ENCODE measurements at regions of chr11 and their contacts with region 1.

Region 1: DNA sequence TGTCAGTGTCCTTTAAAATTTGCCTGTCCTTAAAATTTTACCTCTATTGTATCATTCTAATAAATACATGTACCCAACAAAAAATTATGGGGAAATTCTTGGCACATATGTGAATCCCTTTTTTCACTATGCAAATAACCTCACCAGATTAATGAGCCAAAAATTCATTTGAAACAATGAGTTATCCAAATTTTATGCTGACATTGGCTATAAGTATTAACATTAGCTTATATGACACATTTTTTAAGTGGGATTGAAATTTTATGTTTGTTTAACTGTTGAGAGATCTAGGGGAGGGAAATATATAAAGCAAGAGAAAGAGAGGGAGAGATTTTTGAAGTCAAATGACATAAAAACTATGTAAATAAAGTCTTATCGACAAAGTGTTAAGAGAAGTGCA is 11.8 kb upstream of the PDGFD start:
- DNase-seq: no peak
- H3K4me3 ChIP-seq: no peak overlapping the region
- H3K27ac ChIP-seq: no peak overlapping the region
- H3K4me1 ChIP-seq: no peaks in the 10 kb centered on the region
- H3K27me3 ChIP-seq: peaks cover 0 to 5% of the 10 kb centered on the region in 2 experiments
- CTCF ChIP-seq: no peak
- POLR2A ChIP-seq: no peak

Region 2: GRCh38 chr11:104164028-104164520 is 11.7 kb before region 1 on chr11 and contains the start of gene PDGFD:
- CTCF ChIA-PET with region 1: interaction called, 19 read pairs
- POLR2A ChIA-PET with region 1: no interaction called
- dilution Hi-C with region 1: no loop called
- intact Hi-C with region 1: no loop called
- DNase-seq: peak; percentile 89
- H3K4me3 ChIP-seq: peak within 1 kb of the TSS; percentile 66 to 94 (median 93)
- H3K27ac ChIP-seq: peak within 1 kb of the TSS; percentile 52
- H3K4me1 ChIP-seq: peaks cover 10% of the 10 kb centered on the region
- H3K27me3 ChIP-seq: no peaks in the 10 kb centered on the region
- CTCF ChIP-seq: peak; percentile 57 to 73
- POLR2A ChIP-seq: no peak
- total RNA-seq, gene PDGFD: 13.1 and 14.1 TPM in 2 replicates